K562 (cell line): ENCODE measurements at regions of chr20 and their contacts with region 1.

Region 1: DNA sequence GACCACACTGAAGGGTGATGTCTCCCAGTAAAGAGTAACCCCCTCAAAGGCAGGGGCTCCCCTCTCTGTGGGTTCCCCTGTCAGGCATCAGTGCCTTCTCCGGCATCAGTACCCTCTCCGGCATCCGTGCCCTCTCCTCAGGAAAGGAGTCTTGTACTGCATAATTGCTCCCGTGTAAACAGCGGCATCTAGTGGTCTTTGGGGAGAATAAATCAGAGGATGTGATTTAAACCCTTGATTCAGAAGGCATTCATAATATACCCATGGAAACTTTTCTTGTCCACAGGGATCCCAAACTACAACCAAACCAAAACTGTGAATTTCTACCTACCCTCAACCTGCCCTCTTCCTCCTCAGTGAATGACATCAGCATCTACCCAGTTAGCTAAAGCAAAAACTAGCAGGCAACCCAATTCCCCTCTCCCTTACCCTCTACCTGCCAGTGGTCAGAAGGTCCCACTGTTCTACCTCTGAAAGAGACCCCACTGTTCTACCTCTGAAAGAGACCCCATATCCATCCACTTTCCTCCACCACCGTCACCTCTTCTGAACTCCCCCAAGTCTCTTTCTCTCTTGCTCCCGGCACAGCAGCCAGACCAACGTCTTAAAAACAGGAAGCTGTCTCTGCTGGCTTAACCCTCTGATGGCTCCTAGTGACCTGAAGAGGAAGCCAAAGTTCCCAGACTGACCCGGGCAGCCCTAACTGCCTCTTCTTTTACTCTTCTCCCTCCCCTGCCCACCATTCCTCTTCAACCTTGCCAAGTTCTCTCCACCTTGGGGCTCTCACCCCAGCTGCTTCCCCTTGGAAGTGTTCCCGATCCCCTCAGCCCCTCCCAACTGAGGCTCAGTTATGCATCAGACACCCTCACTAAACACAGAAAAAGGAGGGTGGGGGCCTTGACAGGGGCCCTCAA is 27.2 kb downstream of the UBE2V1 start:
- DNase-seq: peak; percentile 57 to 69 (median 62)
- ATAC-seq: peak; percentile 87
- H3K4me3 ChIP-seq: no peak overlapping the region
- H3K27ac ChIP-seq: peak overlapping the region; percentile 41; the same call in 1 of the 3 replicates
- H3K4me1 ChIP-seq: peaks cover 4 to 20% of the 10 kb centered on the region in 2 experiments
- H3K27me3 ChIP-seq: no peaks in the 10 kb centered on the region
- CTCF ChIP-seq: peak; percentile 78 to 87 (median 85)
- EP300 ChIP-seq: no peak
- POLR2A ChIP-seq: no peak; the same call in 1 of the 2 replicates
- RAD21 ChIP-seq: peak; percentile 59 to 74

Region 2: GRCh38 chr20:50153485-50154377 is 68.0 kb after region 1 on chr20 and contains the start of gene PEDS1:
- CTCF ChIA-PET with region 1: no interaction called
- POLR2A ChIA-PET with region 1: interaction called, 3 read pairs
- in situ Hi-C with region 1: no loop called
- intact Hi-C with region 1: loop called (anchors 5 kb)
- DNase-seq: peak; percentile 93 to 98 (median 98)
- ATAC-seq: peak; percentile 97
- H3K4me3 ChIP-seq: peak within 1 kb of the TSS; percentile 93
- H3K27ac ChIP-seq: peak within 1 kb of the TSS; percentile 92
- H3K4me1 ChIP-seq: peaks cover 27 to 52% of the 10 kb centered on the region in 2 experiments
- H3K27me3 ChIP-seq: no peaks in the 10 kb centered on the region
- CTCF ChIP-seq: no peak
- EP300 ChIP-seq: no peak
- POLR2A ChIP-seq: peak; percentile 84
- RAD21 ChIP-seq: no peak
- polyA plus RNA-seq, gene PEDS1: 2.9 to 3.9 TPM